ENCODE measurements at regions of chr17 and their contacts with region 1.

Region 1: DNA sequence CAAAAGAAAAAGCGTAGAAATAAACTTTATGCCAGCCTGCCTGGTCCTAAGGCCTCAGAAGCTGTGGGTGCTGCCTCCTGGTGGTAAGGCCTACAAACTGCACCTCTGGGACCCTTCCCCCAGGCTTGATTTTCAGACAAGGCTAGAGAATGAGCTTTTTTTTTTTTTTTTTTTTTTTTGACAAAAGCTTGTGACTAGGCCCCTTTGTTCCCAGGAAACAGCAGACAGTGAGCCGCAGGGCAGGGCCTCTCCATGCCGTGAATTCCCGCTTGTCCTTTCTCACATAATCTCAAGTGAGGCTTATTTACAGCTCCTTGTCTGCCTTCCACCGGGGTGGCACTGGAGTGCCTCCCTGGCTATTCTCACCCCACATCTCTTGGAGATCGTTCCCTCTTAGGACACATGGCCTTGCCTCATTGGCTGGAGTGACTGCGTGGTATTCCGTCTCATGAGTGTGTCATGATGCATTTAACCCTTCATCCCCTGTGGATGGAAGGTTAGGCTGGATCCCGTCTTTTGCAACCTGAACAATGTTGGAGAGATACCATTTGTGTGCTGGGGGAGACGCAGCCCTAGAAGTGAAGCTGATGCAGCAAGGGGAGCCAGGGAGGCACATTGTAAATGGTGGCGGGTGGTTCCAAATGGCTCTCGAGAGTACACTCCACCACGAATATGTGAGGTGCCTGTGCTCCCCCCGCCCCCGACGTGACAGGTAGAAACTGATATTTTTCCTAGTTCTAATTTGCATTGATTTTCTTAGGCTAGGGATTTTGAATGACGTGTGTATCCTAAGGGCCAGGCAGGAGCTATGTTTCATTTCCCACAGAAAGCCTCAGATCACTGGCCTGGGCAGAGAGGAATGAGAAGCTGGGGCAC is 49.6 kb downstream of the USP22 start:
- DNase-seq: peak; percentile 3
- ATAC-seq: peak; percentile 77
- H3K4me3 ChIP-seq: no peak overlapping the region
- H3K27ac ChIP-seq: no peak overlapping the region
- H3K4me1 ChIP-seq: no peaks in the 10 kb centered on the region
- H3K27me3 ChIP-seq: no peaks in the 10 kb centered on the region; a peak in 1 of 4 replicates
- CTCF ChIP-seq: peak; percentile 86 to 98 (median 94)
- EP300 ChIP-seq: no peak
- POLR2A ChIP-seq: no peak
- RAD21 ChIP-seq: peak; percentile 83

Region 2: DNA sequence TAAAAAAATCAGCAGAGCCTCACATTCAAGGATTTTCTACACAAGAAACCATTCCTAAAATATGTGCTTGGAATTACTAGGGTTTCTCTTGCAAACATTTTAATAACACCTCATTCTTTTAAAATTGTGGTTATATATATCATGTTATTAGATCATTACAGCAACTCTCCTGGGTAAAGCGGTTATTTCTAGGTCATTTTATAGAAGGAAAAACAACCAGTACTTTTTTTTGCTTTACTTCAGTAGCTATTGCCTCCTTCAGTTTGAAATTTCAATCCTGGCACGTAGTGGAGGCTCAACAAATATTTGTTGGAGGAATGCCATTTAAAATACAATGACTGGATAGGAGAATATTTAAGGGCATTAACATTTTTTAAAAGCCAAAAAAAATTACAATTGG is 193.1 kb before region 1 on chr17:
- CTCF ChIA-PET with region 1: interaction called, 5 read pairs
- POLR2A ChIA-PET with region 1: no interaction called
- RAD21 ChIA-PET with region 1: no interaction called
- SMC1A ChIA-PET with region 1: interaction called, 4 read pairs
- in situ Hi-C with region 1: no loop called
- intact Hi-C with region 1: loop called (anchors 5 kb)
- DNase-seq: no peak
- ATAC-seq: no peak
- H3K4me3 ChIP-seq: no peak overlapping the region
- H3K27ac ChIP-seq: no peak overlapping the region
- H3K4me1 ChIP-seq: no peaks in the 10 kb centered on the region
- H3K27me3 ChIP-seq: no peaks in the 10 kb centered on the region
- CTCF ChIP-seq: no peak
- EP300 ChIP-seq: no peak
- POLR2A ChIP-seq: no peak
- RAD21 ChIP-seq: no peak

Region 3: DNA sequence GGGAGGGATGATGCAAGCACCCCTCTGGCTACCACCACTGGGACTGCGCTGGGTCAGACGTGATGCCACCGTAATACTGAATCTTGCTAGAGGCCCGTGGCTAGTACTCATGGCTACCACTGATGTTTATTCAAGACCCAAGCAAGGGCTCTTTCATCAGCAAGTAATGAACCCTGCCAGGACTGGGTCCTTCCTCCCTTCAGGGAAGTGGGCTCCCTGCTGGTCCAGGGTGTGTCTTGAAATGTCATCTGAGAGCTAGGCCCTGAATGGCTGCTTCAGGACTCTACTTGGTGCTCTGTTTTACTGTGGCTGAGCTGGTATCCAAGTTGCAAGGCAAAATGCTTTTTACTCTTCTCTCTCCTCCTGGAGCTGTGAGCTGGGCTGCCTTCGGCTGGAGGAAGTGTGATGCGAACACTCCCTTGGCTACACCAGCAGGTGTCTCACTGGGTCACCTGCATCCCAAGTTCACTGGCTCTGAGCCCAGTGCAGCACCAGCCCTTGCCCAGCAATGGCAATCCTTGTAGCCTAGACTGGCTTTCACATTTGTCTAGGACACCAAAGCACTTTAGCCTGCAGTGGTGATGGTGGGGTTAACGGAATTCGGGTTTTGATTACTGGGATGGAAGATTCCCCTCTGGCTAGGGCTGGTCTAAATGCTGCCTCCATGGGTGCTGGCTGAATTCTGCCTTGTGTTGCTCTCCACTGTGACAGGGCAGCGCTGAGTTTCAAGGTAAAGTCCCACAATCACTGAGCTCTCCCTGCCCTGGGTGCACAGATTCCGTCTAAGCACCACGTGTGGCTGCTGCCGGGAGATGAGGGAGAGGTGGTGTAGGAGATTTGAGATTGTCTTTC is 49.0 kb before region 1 on chr17:
- CTCF ChIA-PET with region 1: interaction called, 7 read pairs
- POLR2A ChIA-PET with region 1: no interaction called
- RAD21 ChIA-PET with region 1: no interaction called
- SMC1A ChIA-PET with region 1: no interaction called
- in situ Hi-C with region 1: loop called (anchors 5 kb)
- intact Hi-C with region 1: loop called (anchors 1 kb)
- DNase-seq: no peak
- ATAC-seq: peak; percentile 82
- H3K4me3 ChIP-seq: no peak overlapping the region
- H3K27ac ChIP-seq: no peak overlapping the region
- H3K4me1 ChIP-seq: no peaks in the 10 kb centered on the region
- H3K27me3 ChIP-seq: peaks cover 0 to 1% of the 10 kb centered on the region in 2 experiments; a peak in 3 of 4 replicates
- CTCF ChIP-seq: peak; percentile 59 to 60 (median 59)
- EP300 ChIP-seq: no peak
- POLR2A ChIP-seq: no peak
- RAD21 ChIP-seq: peak; percentile 54

Measured in GM12878 (cell line).